ENCODE measurements at regions of chr7 and their contacts with region 1.

Region 1: GRCh38 chr7:142603870-142604448 is 145.3 kb upstream of the PRSS1 start:
- DNase-seq: no peak
- H3K4me3 Mint-ChIP-seq: no peak overlapping the region
- H3K27ac Mint-ChIP-seq: no peak overlapping the region
- H3K4me1 Mint-ChIP-seq: peaks cover 9% of the 10 kb centered on the region
- H3K27me3 Mint-ChIP-seq: peaks cover 6% of the 10 kb centered on the region

Region 2: GRCh38 chr7:142111499-142111898 is 492.5 kb before region 1 on chr7 and contains the start of gene MGAM2:
- intact Hi-C with region 1: no loop called
- DNase-seq: no peak
- H3K4me3 Mint-ChIP-seq: no peak within 1 kb of the TSS
- H3K27ac Mint-ChIP-seq: no peak within 1 kb of the TSS
- H3K4me1 Mint-ChIP-seq: no peaks in the 10 kb centered on the region
- H3K27me3 Mint-ChIP-seq: peaks cover 2% of the 10 kb centered on the region
- total RNA-seq, gene MGAM2: not detected in 2 replicates

Region 3: GRCh38 chr7:142535123-142535779 is 68.7 kb before region 1 on chr7:
- intact Hi-C with region 1: loop called (anchors 1 kb)
- DNase-seq: peak; percentile 58
- H3K4me3 Mint-ChIP-seq: peak overlapping the region; percentile 59
- H3K27ac Mint-ChIP-seq: peak overlapping the region; percentile 62
- H3K4me1 Mint-ChIP-seq: peaks cover 29% of the 10 kb centered on the region
- H3K27me3 Mint-ChIP-seq: no peaks in the 10 kb centered on the region

Region 4: DNA sequence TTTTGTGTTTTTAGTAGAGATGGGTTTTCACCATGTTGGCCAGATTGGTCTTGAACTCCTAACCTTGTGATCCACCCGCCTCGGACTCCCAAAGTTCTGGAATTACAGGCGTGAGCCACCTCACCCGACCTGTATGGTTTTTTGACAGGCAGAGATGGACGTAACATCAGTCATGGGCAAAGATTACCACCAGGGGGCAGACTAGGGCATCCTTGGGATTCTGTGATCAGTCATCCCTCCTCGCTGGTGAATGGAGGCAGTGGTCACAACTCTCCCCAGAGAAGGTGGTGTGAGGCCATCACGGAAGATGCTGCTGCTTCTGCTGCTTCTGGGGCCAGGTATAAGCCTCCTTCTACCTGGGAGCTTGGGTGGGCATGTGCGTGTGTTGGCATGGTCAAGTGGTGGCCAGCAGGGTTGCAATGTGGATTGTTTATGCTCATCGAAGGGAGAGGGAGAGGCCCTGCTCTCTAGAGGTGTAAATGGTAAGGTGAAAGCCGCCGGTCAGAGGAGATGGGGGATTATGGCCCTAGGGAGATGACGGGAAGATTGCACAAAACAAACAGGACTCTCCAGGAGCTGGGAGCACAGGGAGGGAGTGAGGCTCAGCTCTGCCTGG is 22.6 kb after region 1 on chr7:
- intact Hi-C with region 1: loop called (anchors 1 kb)
- DNase-seq: peak; percentile 40
- H3K4me3 Mint-ChIP-seq: peak overlapping the region; percentile 85
- H3K27ac Mint-ChIP-seq: peak overlapping the region; percentile 82
- H3K4me1 Mint-ChIP-seq: no peaks in the 10 kb centered on the region
- H3K27me3 Mint-ChIP-seq: peaks cover 18% of the 10 kb centered on the region

Region 5: DNA sequence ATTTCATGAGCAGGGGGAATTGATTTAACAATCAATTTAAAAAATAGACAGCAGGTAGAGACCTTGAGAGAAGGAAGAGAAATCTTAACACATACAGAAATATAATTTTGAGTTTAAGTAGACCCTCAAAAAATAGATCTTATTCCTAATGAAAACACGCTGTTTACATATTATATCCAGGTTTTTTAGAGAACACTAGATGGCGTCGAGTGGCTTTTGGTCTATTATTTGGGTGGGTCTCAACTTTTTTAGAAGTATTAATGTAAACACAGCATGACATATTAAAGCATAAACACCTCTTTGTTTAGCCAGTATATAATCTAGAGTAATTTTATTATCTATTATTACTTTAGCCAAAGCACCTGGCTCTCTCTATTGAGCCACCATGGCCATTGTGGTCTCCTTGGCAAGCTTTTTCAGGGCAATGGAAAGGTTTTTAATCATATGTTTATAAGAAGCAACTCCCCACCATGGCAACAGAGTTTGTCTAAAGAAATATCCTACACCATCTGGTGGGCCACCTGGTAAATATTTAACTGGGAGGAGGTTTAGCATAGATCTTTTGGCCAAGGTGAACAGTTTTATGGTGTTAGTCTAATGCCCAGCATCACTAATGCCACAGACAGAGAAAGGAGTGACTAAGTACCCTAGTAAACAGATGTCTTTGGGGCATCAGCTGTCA is 85.6 kb after region 1 on chr7:
- intact Hi-C with region 1: no loop called
- DNase-seq: no peak
- H3K4me3 Mint-ChIP-seq: no peak overlapping the region
- H3K27ac Mint-ChIP-seq: no peak overlapping the region
- H3K4me1 Mint-ChIP-seq: peaks cover 22% of the 10 kb centered on the region
- H3K27me3 Mint-ChIP-seq: peaks cover 4% of the 10 kb centered on the region

Region 6: GRCh38 chr7:143240291-143241168 is 636.6 kb after region 1 on chr7:
- intact Hi-C with region 1: no loop called
- DNase-seq: peak; percentile 65
- H3K4me3 Mint-ChIP-seq: no peak overlapping the region
- H3K27ac Mint-ChIP-seq: peak overlapping the region; percentile 74
- H3K4me1 Mint-ChIP-seq: peaks cover 54% of the 10 kb centered on the region
- H3K27me3 Mint-ChIP-seq: peaks cover 8% of the 10 kb centered on the region

Region 7: GRCh38 chr7:143463556-143463955 is 859.6 kb after region 1 on chr7:
- intact Hi-C with region 1: no loop called
- DNase-seq: no peak
- H3K4me3 Mint-ChIP-seq: no peak overlapping the region
- H3K27ac Mint-ChIP-seq: no peak overlapping the region
- H3K4me1 Mint-ChIP-seq: no peaks in the 10 kb centered on the region
- H3K27me3 Mint-ChIP-seq: no peaks in the 10 kb centered on the region

Measured in activated T-helper 1 cell treated with anti-CD3 and anti-CD28 coated beads, Interleukin-12 subunit alpha, Interleukin-12 subunit beta, Interleukin-2, Interleukin-4 antibody, amounts not matched to agents 30 ng/mL and 10 ng/mL and 1 ng/mL, durations not matched to agents 14 hours and 24 hours and 36 hours (primary cell).